CD4-positive, alpha-beta T cell (primary cell): ENCODE measurements at regions of chr7 and their contacts with region 1.

Region 1: GRCh38 chr7:157490457-157490912 is 153.7 kb downstream of the DNAJB6 start:
- DNase-seq: peak in 9 of 14 experiments; percentile 27 to 89 (median 38)
- ATAC-seq: peak; percentile 93
- H3K4me3 ChIP-seq: no peak overlapping the region
- H3K4me3 Mint-ChIP-seq: peak overlapping the region; percentile 17
- H3K27ac ChIP-seq: no peak overlapping the region
- H3K27ac Mint-ChIP-seq: peak overlapping the region; percentile 68
- H3K4me1 ChIP-seq: peaks cover 26% of the 10 kb centered on the region
- H3K4me1 Mint-ChIP-seq: peaks cover 39% of the 10 kb centered on the region
- H3K27me3 ChIP-seq: no peaks in the 10 kb centered on the region
- H3K27me3 Mint-ChIP-seq: no peaks in the 10 kb centered on the region
- CTCF ChIP-seq: no peak

Region 2: GRCh38 chr7:157474689-157475088 is 15.8 kb before region 1 on chr7:
- CTCF ChIA-PET with region 1: no interaction called
- POLR2A ChIA-PET with region 1: interaction called, 22 read pairs
- intact Hi-C with region 1: loop called in 1 of 2 experiments (anchors 2 kb)
- DNase-seq: peak in 1 of 14 experiments; percentile 33
- ATAC-seq: no peak
- H3K4me3 ChIP-seq: no peak overlapping the region
- H3K4me3 Mint-ChIP-seq: no peak overlapping the region
- H3K27ac ChIP-seq: no peak overlapping the region
- H3K27ac Mint-ChIP-seq: peak overlapping the region; percentile 27
- H3K4me1 ChIP-seq: peaks cover 76% of the 10 kb centered on the region
- H3K4me1 Mint-ChIP-seq: peaks cover 65% of the 10 kb centered on the region
- H3K27me3 ChIP-seq: no peaks in the 10 kb centered on the region
- H3K27me3 Mint-ChIP-seq: no peaks in the 10 kb centered on the region
- CTCF ChIP-seq: peak; percentile 28

Region 3: DNA sequence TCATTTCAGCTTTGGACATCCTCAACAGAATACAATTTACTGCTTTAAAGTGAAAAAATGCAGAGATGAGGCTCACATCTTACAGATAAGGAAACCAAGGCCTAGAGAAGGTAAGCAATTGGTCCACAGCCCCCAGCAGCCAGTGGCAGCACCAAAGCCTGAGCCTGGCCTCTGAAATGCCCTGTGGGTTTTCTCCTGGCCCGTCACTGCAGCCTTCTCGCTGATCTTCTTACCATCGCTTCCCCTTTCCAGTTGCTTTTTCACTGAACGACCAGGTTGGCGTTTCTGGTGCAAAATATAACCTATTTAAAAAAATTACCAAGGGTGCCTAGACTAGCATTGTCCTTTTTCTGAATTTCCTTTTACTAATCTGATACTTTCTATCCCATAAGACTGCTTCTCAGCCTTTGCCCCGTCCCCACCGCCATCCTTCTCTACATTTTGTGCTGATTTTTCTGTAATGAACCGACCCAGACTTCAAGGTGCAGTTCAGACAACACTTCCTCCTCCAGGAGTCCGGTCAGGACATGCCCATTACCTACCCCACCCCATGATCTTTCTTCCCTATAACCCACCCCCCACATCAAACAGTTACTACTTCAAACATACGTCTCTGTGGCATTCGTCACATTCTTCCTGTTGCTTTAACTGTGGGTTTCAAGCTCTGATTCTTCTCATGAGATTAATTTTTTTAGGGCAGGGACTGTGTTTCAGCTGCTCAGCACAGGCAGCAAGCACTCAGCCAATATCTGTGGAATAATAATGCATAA is 135.7 kb after region 1 on chr7:
- CTCF ChIA-PET with region 1: no interaction called
- POLR2A ChIA-PET with region 1: no interaction called
- intact Hi-C with region 1: loop called in 1 of 2 experiments (anchors 10 kb)
- DNase-seq: peak in 8 of 14 experiments; percentile 14 to 74 (median 42)
- ATAC-seq: peak; percentile 72
- H3K4me3 ChIP-seq: peak overlapping the region; percentile 19
- H3K4me3 Mint-ChIP-seq: peak overlapping the region; percentile 72
- H3K27ac ChIP-seq: no peak overlapping the region
- H3K27ac Mint-ChIP-seq: peak overlapping the region; percentile 68
- H3K4me1 ChIP-seq: peaks cover 57% of the 10 kb centered on the region
- H3K4me1 Mint-ChIP-seq: peaks cover 80% of the 10 kb centered on the region
- H3K27me3 ChIP-seq: peaks cover 0 to 3% of the 10 kb centered on the region in 2 experiments
- H3K27me3 Mint-ChIP-seq: no peaks in the 10 kb centered on the region
- CTCF ChIP-seq: no peak